ENCODE measurements at regions of chr2 and their contacts with region 1.

Region 1: GRCh38 chr2:64124571-64124970 is 19.6 kb downstream of the PELI1 start:
- DNase-seq: no peak
- ATAC-seq: peak; percentile 9; the same call in 1 of the 3 replicates
- H3K4me3 ChIP-seq: no peak overlapping the region
- H3K27ac ChIP-seq: no peak overlapping the region
- H3K4me1 ChIP-seq: peaks cover 15% of the 10 kb centered on the region; the same call in 1 of the 2 replicates
- H3K27me3 ChIP-seq: no peaks in the 10 kb centered on the region
- CTCF ChIP-seq: no peak
- EP300 ChIP-seq: no peak
- POLR2A ChIP-seq: no peak
- RAD21 ChIP-seq: no peak

Region 2: DNA sequence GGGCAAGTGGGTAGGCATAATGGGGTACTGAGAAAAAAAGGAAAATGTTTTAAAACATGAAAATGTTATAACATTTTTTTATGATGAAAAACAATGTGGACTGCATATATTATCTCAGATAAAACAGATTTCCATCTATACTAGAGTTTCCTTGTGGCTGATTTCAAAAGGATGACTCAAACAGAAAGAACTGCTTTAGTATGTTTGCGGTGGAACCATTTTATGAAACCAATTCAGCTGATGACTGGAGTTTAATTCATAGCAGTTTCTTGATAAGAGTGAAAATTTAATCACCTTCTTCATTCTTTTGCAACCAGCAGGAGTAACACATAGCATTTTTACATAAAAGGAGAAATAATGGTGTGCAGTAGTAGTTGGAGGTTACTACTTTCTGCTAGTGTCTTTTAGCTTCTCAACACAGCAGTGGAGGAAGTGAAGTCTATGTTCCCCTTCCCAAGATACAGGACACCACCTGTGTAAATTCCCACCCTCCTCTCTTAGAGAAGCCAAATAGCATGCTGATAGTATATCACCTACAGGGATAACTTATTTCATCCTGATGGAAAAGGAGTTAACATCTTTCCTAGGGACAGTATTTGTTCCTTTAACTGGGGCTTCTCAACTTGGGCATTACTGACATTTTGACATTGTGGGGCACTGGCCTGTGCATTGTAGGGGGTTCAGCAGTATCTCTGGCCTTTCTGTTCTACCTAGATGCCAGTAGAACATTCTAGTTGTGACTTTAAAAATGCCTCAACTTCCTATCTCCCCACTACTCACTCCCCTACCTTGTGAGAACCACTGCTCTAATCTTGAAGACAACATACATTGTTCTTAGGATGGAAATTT is 10.3 kb before region 1 on chr2:
- CTCF ChIA-PET with region 1: interaction called, 4 read pairs
- POLR2A ChIA-PET with region 1: interaction called, 9 read pairs
- RAD21 ChIA-PET with region 1: interaction called, 53 read pairs
- SMC1A ChIA-PET with region 1: interaction called, 495 read pairs
- in situ Hi-C with region 1: no loop called
- intact Hi-C with region 1: no loop called
- DNase-seq: peak; percentile 56
- ATAC-seq: peak; percentile 65
- H3K4me3 ChIP-seq: peak overlapping the region; percentile 28; the same call in 1 of the 2 replicates
- H3K27ac ChIP-seq: peak overlapping the region; percentile 72
- H3K4me1 ChIP-seq: peaks cover 50% of the 10 kb centered on the region
- H3K27me3 ChIP-seq: no peaks in the 10 kb centered on the region
- CTCF ChIP-seq: no peak
- EP300 ChIP-seq: peak; percentile 59 to 82; a peak in 3 of 4 replicates
- POLR2A ChIP-seq: no peak
- RAD21 ChIP-seq: no peak

Region 3: GRCh38 chr2:64165706-64166105 is 41.1 kb after region 1 on chr2:
- CTCF ChIA-PET with region 1: no interaction called
- POLR2A ChIA-PET with region 1: no interaction called
- RAD21 ChIA-PET with region 1: no interaction called
- SMC1A ChIA-PET with region 1: no interaction called
- in situ Hi-C with region 1: no loop called
- intact Hi-C with region 1: no loop called
- DNase-seq: no peak
- ATAC-seq: no peak
- H3K4me3 ChIP-seq: no peak overlapping the region
- H3K27ac ChIP-seq: no peak overlapping the region
- H3K4me1 ChIP-seq: no peaks in the 10 kb centered on the region
- H3K27me3 ChIP-seq: no peaks in the 10 kb centered on the region
- CTCF ChIP-seq: no peak
- EP300 ChIP-seq: no peak
- POLR2A ChIP-seq: no peak
- RAD21 ChIP-seq: no peak